ENCODE measurements at regions of chr3 and their contacts with region 1.

Region 1: GRCh38 chr3:9362731-9363530 is at the start of gene THUMPD3:
- ATAC-seq: peak; percentile 94 to 97 (median 95)
- H3K4me3 ChIP-seq: peak within 1 kb of the TSS; percentile 51 to 67 (median 64)
- H3K27ac ChIP-seq: peak within 1 kb of the TSS; percentile 92 to 97
- H3K4me1 ChIP-seq: peaks cover 7 to 13% of the 10 kb centered on the region in 2 donors
- total RNA-seq, gene THUMPD3: 35.0 to 57.4 (median 42.0) TPM

Region 2: DNA sequence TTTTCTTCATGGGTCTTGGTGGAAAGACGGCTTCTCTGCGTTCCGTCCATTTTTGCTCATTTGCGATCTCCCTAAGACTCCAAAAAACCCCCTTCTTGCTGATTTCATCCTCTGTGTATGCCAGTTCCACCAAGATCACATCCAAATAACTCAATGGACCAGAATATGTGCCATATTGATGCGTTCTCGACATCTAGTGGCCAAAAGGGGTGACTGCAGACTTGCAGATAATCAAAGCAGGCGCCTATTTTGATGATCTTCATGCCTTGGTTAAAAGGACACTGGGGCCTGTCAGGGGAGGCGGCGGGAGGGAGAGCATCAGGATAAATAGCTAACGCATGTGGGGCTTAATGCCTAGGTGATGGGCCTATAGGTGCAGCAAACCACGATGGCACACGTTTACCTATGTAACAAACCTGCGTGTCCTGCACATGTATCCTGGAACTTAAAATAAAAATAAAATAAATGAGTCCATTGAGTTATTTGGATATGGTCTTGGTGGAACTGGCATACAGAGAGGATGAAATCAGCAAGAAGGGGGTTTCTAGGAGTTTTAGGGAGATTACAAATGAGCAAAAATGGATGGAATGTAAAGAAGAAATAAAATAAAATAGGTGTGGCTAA is 295.5 kb before region 1 on chr3:
- in situ Hi-C with region 1: no loop called
- ATAC-seq: peak in 6 of 8 experiments; percentile 34 to 80 (median 56)
- H3K4me3 ChIP-seq: no peak overlapping the region
- H3K27ac ChIP-seq: no peak overlapping the region
- H3K4me1 ChIP-seq: peaks cover 0 to 11% of the 10 kb centered on the region in 2 donors

Region 3: GRCh38 chr3:9452417-9452816 is 89.5 kb after region 1 on chr3:
- in situ Hi-C with region 1: loop called in 1 of 9 experiments (anchors 25 kb)
- ATAC-seq: peak in 1 of 8 experiments; percentile 33
- H3K4me3 ChIP-seq: no peak overlapping the region
- H3K27ac ChIP-seq: no peak overlapping the region
- H3K4me1 ChIP-seq: no peaks in the 10 kb centered on the region